Transverse colon (tissue), 4 donors: ENCODE measurements at regions of chrX and their contacts with region 1.

Region 1: GRCh38 chrX:13515211-13515930 is 54.0 kb upstream of the EGFL6 start:
- DNase-seq: no peak
- H3K4me3 ChIP-seq: no peak overlapping the region
- H3K27ac ChIP-seq: no peak overlapping the region
- H3K4me1 ChIP-seq: no peaks in the 10 kb centered on the region
- H3K27me3 ChIP-seq: no peaks in the 10 kb centered on the region
- CTCF ChIP-seq: no peak
- EP300 ChIP-seq: no peak
- POLR2A ChIP-seq: no peak

Region 2: GRCh38 chrX:13123857-13124345 is 391.5 kb before region 1 on chrX:
- in situ Hi-C with region 1: no loop called
- intact Hi-C with region 1: no loop called
- DNase-seq: no peak
- H3K4me3 ChIP-seq: no peak overlapping the region
- H3K27ac ChIP-seq: peak overlapping the region; percentile 5 to 45 (median 28)
- H3K4me1 ChIP-seq: peaks cover 0 to 30% (median 3%) of the 10 kb centered on the region in 4 donors
- H3K27me3 ChIP-seq: no peaks in the 10 kb centered on the region
- CTCF ChIP-seq: no peak
- EP300 ChIP-seq: no peak
- POLR2A ChIP-seq: no peak

Region 3: DNA sequence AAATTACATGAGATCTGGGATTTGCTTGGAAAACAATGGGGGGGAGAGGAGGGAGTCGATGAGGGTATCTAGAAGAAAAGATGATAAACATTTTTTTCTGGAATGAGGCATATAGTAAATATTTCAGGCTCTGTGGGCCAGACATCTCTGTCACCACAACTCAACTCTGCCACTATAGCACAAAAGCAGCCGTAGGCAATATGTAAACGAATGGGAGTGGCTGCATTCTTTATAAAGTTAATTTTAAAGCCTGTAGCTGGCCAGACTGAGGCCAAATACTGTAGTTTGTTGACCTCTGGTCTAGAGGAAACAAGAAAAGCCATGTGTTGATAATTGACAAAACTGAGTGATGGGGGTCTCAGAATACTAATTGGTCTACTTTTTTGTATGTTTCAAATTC is 123.5 kb after region 1 on chrX:
- in situ Hi-C with region 1: loop called in 3 of 4 experiments (anchors 10 to 25 kb)
- intact Hi-C with region 1: no loop called
- DNase-seq: no peak
- H3K4me3 ChIP-seq: no peak overlapping the region
- H3K27ac ChIP-seq: no peak overlapping the region
- H3K4me1 ChIP-seq: no peaks in the 10 kb centered on the region
- H3K27me3 ChIP-seq: no peaks in the 10 kb centered on the region
- CTCF ChIP-seq: no peak
- EP300 ChIP-seq: no peak
- POLR2A ChIP-seq: no peak